ENCODE measurements at regions of chrX and their contacts with region 1.

Region 1: DNA sequence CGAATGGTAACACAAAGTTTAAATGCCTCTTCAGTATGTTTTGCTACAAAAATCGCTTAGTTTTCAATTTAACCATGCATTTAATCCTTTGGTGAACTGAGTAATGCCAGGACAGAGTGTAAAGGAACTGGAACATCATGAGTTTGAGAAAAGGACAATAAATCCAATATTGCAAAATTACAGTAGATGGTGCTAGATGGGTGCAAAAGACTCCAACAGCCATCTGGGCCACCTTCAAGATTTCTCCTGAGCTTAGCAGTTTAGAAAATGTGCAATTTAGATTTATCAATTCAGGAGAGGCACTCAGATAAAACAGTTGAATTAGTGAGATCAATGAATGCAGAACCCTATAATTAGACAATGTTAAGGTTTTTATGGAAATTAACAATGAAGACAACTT is 33.2 kb upstream of the MID1IP1 start:
- DNase-seq: peak; percentile 6 to 19 (median 10)
- H3K4me3 ChIP-seq: no peak overlapping the region
- H3K4me3 Mint-ChIP-seq: no peak overlapping the region
- H3K27ac ChIP-seq: no peak overlapping the region
- H3K27ac Mint-ChIP-seq: no peak overlapping the region
- H3K4me1 ChIP-seq: no peaks in the 10 kb centered on the region
- H3K4me1 Mint-ChIP-seq: no peaks in the 10 kb centered on the region
- H3K27me3 ChIP-seq: no peaks in the 10 kb centered on the region
- H3K27me3 Mint-ChIP-seq: peaks cover 0 to 7% (median 2%) of the 10 kb centered on the region in 3 donors
- CTCF ChIP-seq: peak; percentile 26

Region 2: GRCh38 chrX:38595801-38596200 is 172.3 kb before region 1 on chrX:
- intact Hi-C with region 1: no loop called
- DNase-seq: no peak
- H3K4me3 ChIP-seq: no peak overlapping the region
- H3K4me3 Mint-ChIP-seq: no peak overlapping the region
- H3K27ac ChIP-seq: no peak overlapping the region
- H3K27ac Mint-ChIP-seq: no peak overlapping the region
- H3K4me1 ChIP-seq: no peaks in the 10 kb centered on the region
- H3K4me1 Mint-ChIP-seq: no peaks in the 10 kb centered on the region
- H3K27me3 ChIP-seq: no peaks in the 10 kb centered on the region
- H3K27me3 Mint-ChIP-seq: peaks cover 0 to 2% (median 1%) of the 10 kb centered on the region in 3 donors
- CTCF ChIP-seq: no peak

Region 3: DNA sequence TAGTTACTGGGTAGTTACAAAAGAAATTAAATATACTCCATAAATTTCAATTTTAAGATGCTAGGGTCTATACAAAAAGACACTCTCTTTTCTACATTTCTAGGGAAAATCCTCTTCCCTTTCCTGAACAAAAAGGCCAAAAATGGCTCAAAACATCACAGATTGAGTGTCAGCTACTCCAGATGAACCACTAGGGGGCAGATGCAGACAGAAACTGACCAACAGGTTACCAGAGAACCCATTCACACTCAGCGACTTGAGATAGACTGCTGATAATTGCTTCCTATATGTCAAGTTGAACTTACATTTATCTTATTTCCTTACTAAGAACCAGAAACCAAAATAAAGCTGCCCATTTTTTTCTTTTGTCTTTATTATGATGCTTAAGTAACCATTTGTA is 50.2 kb before region 1 on chrX:
- intact Hi-C with region 1: no loop called
- DNase-seq: peak; percentile 6 to 30 (median 25)
- H3K4me3 ChIP-seq: no peak overlapping the region
- H3K4me3 Mint-ChIP-seq: no peak overlapping the region
- H3K27ac ChIP-seq: no peak overlapping the region
- H3K27ac Mint-ChIP-seq: peak overlapping the region in 1 of 7 donors; percentile 24
- H3K4me1 ChIP-seq: no peaks in the 10 kb centered on the region
- H3K4me1 Mint-ChIP-seq: peaks cover 9% of the 10 kb centered on the region
- H3K27me3 ChIP-seq: no peaks in the 10 kb centered on the region
- H3K27me3 Mint-ChIP-seq: peaks cover 0 to 4% (median 0%) of the 10 kb centered on the region in 3 donors
- CTCF ChIP-seq: peak; percentile 68

Region 4: GRCh38 chrX:38841750-38842149 is 73.7 kb after region 1 on chrX:
- intact Hi-C with region 1: no loop called
- DNase-seq: no peak
- H3K4me3 ChIP-seq: no peak overlapping the region
- H3K4me3 Mint-ChIP-seq: no peak overlapping the region
- H3K27ac ChIP-seq: no peak overlapping the region
- H3K27ac Mint-ChIP-seq: no peak overlapping the region
- H3K4me1 ChIP-seq: no peaks in the 10 kb centered on the region
- H3K4me1 Mint-ChIP-seq: no peaks in the 10 kb centered on the region
- H3K27me3 ChIP-seq: peaks cover 0 to 2% of the 10 kb centered on the region in 2 donors
- H3K27me3 Mint-ChIP-seq: no peaks in the 10 kb centered on the region
- CTCF ChIP-seq: no peak

Region 5: GRCh38 chrX:38985375-38985774 is 217.3 kb after region 1 on chrX:
- intact Hi-C with region 1: loop called in 1 of 2 experiments (anchors 10 kb)
- DNase-seq: peak in 2 of 3 donors; percentile 7 to 21
- H3K4me3 ChIP-seq: no peak overlapping the region
- H3K4me3 Mint-ChIP-seq: no peak overlapping the region
- H3K27ac ChIP-seq: no peak overlapping the region
- H3K27ac Mint-ChIP-seq: peak overlapping the region in 1 of 7 donors; percentile 47
- H3K4me1 ChIP-seq: peaks cover 22 to 27% of the 10 kb centered on the region in 2 donors
- H3K4me1 Mint-ChIP-seq: peaks cover 24% of the 10 kb centered on the region
- H3K27me3 ChIP-seq: peaks cover 0 to 2% of the 10 kb centered on the region in 2 donors
- H3K27me3 Mint-ChIP-seq: peaks cover 0 to 2% (median 1%) of the 10 kb centered on the region in 3 donors
- CTCF ChIP-seq: peak; percentile 42

Measured in CD14-positive monocyte (primary cell).